ENCODE measurements at regions of chr4 and their contacts with region 1.

Region 1: DNA sequence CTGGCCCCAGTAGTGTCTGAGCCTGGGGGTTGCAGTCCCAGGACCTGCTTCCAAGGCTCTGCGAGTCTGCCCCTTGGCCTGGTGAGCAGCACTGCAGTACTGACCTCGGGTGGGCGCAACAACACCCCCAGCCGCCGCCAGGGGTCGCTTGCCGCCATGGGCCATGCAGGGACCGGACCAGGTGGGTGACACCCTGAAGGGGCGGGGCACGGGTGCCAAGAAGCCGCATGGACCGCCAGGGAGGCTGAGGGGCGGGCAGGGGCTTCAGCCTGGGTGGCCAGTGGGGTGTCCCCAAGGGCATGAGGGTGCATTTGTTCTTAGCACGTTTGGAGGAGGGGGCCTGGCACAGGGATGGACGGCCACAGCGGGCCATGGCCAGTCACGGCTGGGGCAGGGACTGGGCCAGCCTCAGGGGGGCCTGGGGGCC is 25.0 kb downstream of the TACC3 start:
- DNase-seq: peak; percentile 45 to 60 (median 47)
- H3K4me3 ChIP-seq: no peak overlapping the region
- H3K4me3 Mint-ChIP-seq: no peak overlapping the region
- H3K27ac ChIP-seq: no peak overlapping the region
- H3K27ac Mint-ChIP-seq: no peak overlapping the region
- H3K4me1 ChIP-seq: peaks cover 5 to 6% of the 10 kb centered on the region in 2 donors
- H3K4me1 Mint-ChIP-seq: no peaks in the 10 kb centered on the region
- H3K27me3 ChIP-seq: peaks cover 0 to 6% of the 10 kb centered on the region in 2 donors
- H3K27me3 Mint-ChIP-seq: peaks cover 1 to 6% (median 1%) of the 10 kb centered on the region in 3 donors
- CTCF ChIP-seq: peak; percentile 82

Region 2: GRCh38 chr4:1721004-1721665 is 25.1 kb before region 1 on chr4 and contains the starts of genes TACC3 and TMEM129:
- intact Hi-C with region 1: no loop called
- DNase-seq: peak; percentile 88 to 91 (median 89)
- H3K4me3 ChIP-seq: peak within 1 kb of the TSS; percentile 51 to 80 (median 56)
- H3K4me3 Mint-ChIP-seq: peak within 1 kb of the TSS; percentile 85 to 98
- H3K27ac ChIP-seq: peak within 1 kb of the TSS; percentile 88 to 96
- H3K27ac Mint-ChIP-seq: peak within 1 kb of the TSS; percentile 97 to 100 (median 98)
- H3K4me1 ChIP-seq: peaks cover 59 to 75% of the 10 kb centered on the region in 2 donors
- H3K4me1 Mint-ChIP-seq: peaks cover 62% of the 10 kb centered on the region
- H3K27me3 ChIP-seq: no peaks in the 10 kb centered on the region
- H3K27me3 Mint-ChIP-seq: peaks cover 0 to 3% (median 0%) of the 10 kb centered on the region in 3 donors
- CTCF ChIP-seq: no peak
- polyA plus RNA-seq, gene TACC3: 43.7 to 84.2 (median 56.6) TPM
- polyA plus RNA-seq, gene TMEM129: 22.4 to 40.2 (median 24.1) TPM

Region 3: DNA sequence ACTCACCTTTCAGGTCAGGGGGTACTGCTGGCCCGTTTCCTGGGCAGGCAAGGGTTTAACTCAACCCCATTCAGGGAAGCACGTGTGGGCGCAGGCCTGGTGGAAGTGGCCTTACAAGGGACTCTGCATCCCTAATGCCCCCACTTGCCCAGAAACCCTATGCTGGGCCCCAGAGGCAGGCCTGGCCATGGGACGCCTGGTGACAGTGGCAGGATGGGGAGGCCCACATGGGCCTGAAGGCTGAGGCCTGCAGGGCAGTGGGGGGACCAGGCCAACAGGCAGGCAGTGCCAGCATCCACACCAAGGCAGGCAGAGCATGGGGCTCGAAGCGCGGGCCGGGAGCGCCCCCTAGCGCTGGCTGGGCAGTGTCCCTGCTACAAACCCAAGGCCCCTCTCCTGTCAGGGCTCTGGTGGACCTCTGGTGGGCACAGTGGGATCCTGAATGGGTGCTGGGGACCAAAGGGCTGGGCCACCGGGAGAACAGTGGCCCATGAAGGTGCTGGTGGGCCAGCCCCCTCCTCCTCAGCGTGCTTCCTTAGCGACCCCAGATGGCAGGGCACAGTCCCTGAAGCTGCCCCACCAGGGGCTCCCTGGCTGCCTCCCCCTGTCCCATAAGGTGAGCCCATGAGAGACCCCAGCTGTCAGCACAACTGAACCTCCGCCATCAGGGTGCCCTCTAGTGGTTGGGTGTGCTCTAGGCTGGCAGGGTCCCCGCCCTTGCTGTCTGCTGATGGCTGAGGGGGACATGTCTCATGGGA is 63.7 kb after region 1 on chr4:
- intact Hi-C with region 1: loop called (anchors 1 to 5 kb)
- DNase-seq: peak; percentile 32 to 51 (median 50)
- H3K4me3 ChIP-seq: no peak overlapping the region
- H3K4me3 Mint-ChIP-seq: no peak overlapping the region
- H3K27ac ChIP-seq: no peak overlapping the region
- H3K27ac Mint-ChIP-seq: no peak overlapping the region
- H3K4me1 ChIP-seq: no peaks in the 10 kb centered on the region
- H3K4me1 Mint-ChIP-seq: no peaks in the 10 kb centered on the region
- H3K27me3 ChIP-seq: no peaks in the 10 kb centered on the region
- H3K27me3 Mint-ChIP-seq: peaks cover 0 to 4% (median 2%) of the 10 kb centered on the region in 3 donors
- CTCF ChIP-seq: peak; percentile 92

Region 4: GRCh38 chr4:1899149-1900086 is 153.1 kb after region 1 on chr4:
- intact Hi-C with region 1: loop called (anchors 2 to 5 kb)
- DNase-seq: peak; percentile 64 to 76 (median 75)
- H3K4me3 ChIP-seq: no peak overlapping the region
- H3K4me3 Mint-ChIP-seq: peak overlapping the region in 1 of 2 donors; percentile 59
- H3K27ac ChIP-seq: no peak overlapping the region
- H3K27ac Mint-ChIP-seq: peak overlapping the region in 2 of 7 donors; percentile 71 to 72
- H3K4me1 ChIP-seq: peaks cover 0 to 2% of the 10 kb centered on the region in 2 donors
- H3K4me1 Mint-ChIP-seq: peaks cover 4% of the 10 kb centered on the region
- H3K27me3 ChIP-seq: no peaks in the 10 kb centered on the region
- H3K27me3 Mint-ChIP-seq: no peaks in the 10 kb centered on the region
- CTCF ChIP-seq: peak; percentile 97

Region 5: GRCh38 chr4:1910643-1911042 is 164.4 kb after region 1 on chr4:
- intact Hi-C with region 1: no loop called
- DNase-seq: no peak
- H3K4me3 ChIP-seq: no peak overlapping the region
- H3K4me3 Mint-ChIP-seq: no peak overlapping the region
- H3K27ac ChIP-seq: no peak overlapping the region
- H3K27ac Mint-ChIP-seq: peak overlapping the region in 3 of 7 donors; percentile 1 to 64 (median 44)
- H3K4me1 ChIP-seq: no peaks in the 10 kb centered on the region
- H3K4me1 Mint-ChIP-seq: no peaks in the 10 kb centered on the region
- H3K27me3 ChIP-seq: no peaks in the 10 kb centered on the region
- H3K27me3 Mint-ChIP-seq: peaks cover 0 to 1% (median 0%) of the 10 kb centered on the region in 3 donors
- CTCF ChIP-seq: peak; percentile 27

Measured in CD14-positive monocyte (primary cell).